ENCODE measurements at regions of chr11 and their contacts with region 1.

Region 1: DNA sequence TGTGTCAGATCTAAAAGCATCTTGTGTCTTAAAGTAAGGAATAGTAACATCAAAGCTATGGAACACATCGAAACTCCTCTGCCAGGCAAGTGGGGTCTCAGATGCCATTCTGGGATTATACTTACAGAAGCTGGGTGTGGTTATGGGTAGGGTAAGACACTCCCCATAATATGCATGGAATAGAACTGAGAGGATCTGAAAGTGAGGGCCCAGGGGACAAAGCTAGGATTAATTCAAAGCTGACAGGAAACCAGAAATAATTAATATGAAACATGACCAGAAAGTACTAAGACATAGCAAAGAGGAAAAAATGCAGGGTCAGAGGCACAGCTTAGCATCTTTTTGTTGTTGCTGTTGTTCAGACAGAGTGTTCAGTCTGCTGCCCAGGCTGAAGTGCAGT is 40.2 kb upstream of the EED start:
- DNase-seq: no peak

Region 2: GRCh38 chr11:86156381-86156955 is 47.9 kb before region 1 on chr11:
- intact Hi-C with region 1: loop called (anchors 1 kb)
- DNase-seq: no peak

Region 3: DNA sequence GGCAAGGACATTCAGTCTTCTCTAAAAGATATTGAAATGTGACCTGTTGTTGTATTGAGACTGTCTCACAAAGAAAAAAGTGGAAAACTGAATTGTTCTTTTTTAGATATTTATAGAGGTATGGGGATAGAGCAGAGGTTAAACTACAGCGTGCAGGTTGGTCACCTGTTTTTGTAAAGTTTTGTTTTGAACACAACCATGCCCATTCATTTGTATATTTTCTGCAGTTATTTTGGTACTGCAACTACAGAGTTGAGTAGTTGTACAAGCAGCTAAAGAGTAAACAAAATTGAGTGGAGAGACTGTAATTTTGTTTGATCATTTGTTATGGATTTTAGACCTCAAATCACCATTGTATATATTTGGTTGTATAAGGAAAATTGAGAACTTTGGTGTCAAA is 51.5 kb after region 1 on chr11:
- intact Hi-C with region 1: no loop called
- DNase-seq: no peak

Measured in posterior cingulate gyrus (tissue), 11 donors.